Left colon (tissue), 2 donors: ENCODE measurements at regions of chr10 and their contacts with region 1.

Region 1: DNA sequence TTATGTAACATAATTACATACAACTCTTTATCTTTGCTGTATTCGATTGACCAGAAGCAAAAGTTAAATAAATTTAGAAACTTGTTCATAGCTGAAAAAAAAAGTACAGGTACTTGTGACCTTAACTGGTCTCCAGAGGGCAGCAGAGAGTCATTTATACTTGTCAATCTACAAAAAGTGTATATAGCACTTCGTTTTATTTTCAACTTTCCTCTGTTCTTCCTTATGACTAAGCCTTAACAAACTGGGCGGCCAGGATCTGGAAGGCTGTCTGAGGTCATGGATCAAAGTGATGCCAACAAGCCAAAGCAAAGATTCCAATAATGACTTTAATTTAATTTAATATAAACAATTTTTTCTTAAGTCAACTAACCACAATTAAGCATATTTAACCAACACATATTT is 29.8 kb downstream of the C10orf67 start:
- DNase-seq: peak in 1 of 2 donors; percentile 62
- ATAC-seq: peak; percentile 80

Region 2: GRCh38 chr10:23525406-23525805 is 210.6 kb after region 1 on chr10:
- intact Hi-C with region 1: loop called (anchors 5 to 10 kb)
- DNase-seq: peak in 1 of 2 donors; percentile 13
- ATAC-seq: peak; percentile 87

Region 3: DNA sequence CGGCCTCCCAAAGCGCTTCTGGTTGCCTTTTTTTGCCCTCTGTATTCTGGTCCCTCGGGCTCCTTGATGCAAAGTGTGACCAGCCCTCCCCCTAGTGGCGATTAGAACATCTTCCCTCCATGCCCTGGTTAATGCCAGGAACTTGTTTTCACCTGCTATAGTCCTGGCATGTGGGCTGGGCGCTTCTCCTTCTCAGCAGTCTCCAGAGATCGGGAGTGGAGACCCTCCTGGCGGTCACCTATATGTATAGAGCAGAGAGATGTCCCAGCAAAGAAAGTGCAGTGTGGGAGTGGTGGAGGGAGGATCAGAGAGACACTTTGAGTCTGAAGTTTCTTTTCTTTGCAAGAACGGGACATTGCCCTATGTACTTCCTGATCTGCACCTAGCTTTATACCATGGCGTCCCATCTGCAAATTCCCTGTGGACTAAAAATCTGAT is 388.2 kb after region 1 on chr10:
- intact Hi-C with region 1: loop called in 1 of 2 experiments (anchors 2 kb)
- DNase-seq: peak; percentile 28 to 51
- ATAC-seq: peak; percentile 90

Region 4: GRCh38 chr10:24197263-24197662 is 882.4 kb after region 1 on chr10:
- intact Hi-C with region 1: loop called in 1 of 2 experiments (anchors 10 kb)
- DNase-seq: no peak
- ATAC-seq: no peak